ENCODE measurements at regions of chr14 and their contacts with region 1.

Region 1: GRCh38 chr14:89977668-89978067 is 21.9 kb downstream of the TDP1 start:
- DNase-seq: no peak
- ATAC-seq: no peak
- H3K4me3 ChIP-seq: no peak overlapping the region
- H3K27ac ChIP-seq: no peak overlapping the region
- H3K4me1 ChIP-seq: peaks cover 0 to 5% of the 10 kb centered on the region in 2 donors
- H3K27me3 ChIP-seq: no peaks in the 10 kb centered on the region
- CTCF ChIP-seq: no peak
- POLR2A ChIP-seq: no peak

Region 2: GRCh38 chr14:90045616-90046015 is 67.9 kb after region 1 on chr14:
- in situ Hi-C with region 1: no loop called
- intact Hi-C with region 1: no loop called
- DNase-seq: no peak
- ATAC-seq: no peak
- H3K4me3 ChIP-seq: no peak overlapping the region
- H3K27ac ChIP-seq: no peak overlapping the region
- H3K4me1 ChIP-seq: no peaks in the 10 kb centered on the region
- H3K27me3 ChIP-seq: no peaks in the 10 kb centered on the region
- CTCF ChIP-seq: no peak
- POLR2A ChIP-seq: no peak

Region 3: DNA sequence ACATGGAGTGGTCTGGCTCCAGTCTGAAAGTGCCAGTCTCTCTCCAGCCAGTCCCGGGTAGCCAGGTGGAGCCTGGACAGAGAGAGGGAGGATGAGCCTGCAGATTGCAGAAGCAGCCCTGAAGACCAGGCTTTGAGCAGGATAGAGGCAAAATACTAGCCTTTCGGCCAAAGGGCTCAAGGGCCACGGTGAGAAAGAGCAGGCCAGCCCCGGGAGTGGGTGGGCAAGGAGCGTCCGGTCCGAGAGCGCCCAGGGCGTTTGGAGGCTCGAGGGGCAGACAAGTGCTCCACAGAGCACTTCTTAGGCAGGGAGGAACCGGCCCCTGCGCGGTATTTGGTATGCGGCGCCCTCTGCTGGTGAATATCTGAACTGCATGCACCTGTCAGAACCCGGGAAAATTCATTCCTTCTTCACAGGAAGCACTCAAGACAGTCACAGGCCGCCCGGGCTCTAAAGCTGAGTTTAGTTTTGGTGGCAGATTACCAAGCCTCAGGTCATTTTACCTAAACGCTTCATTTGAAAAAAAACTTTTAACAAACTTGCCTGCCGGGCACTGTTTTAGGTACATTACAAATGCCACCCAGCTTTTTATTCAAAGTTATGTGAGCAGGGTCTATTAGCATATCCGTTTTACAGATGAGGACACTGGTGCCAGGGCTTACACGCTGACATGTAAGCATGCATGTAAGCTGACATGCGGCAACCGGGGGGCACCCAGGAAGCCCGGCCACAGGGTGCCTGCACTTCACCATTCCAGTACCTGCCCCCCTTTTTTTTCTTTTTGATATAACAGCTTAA is 257.7 kb after region 1 on chr14:
- in situ Hi-C with region 1: loop called in 1 of 4 experiments (anchors 25 kb)
- intact Hi-C with region 1: no loop called
- DNase-seq: peak in 1 of 2 donors; percentile 9
- ATAC-seq: no peak
- H3K4me3 ChIP-seq: no peak overlapping the region
- H3K27ac ChIP-seq: no peak overlapping the region
- H3K4me1 ChIP-seq: no peaks in the 10 kb centered on the region
- H3K27me3 ChIP-seq: peaks cover 4 to 16% (median 7%) of the 10 kb centered on the region in 3 donors
- CTCF ChIP-seq: peak; percentile 40 to 70 (median 66)
- POLR2A ChIP-seq: no peak

Region 4: GRCh38 chr14:90533591-90534021 is 555.9 kb after region 1 on chr14:
- in situ Hi-C with region 1: no loop called
- intact Hi-C with region 1: no loop called
- DNase-seq: no peak
- ATAC-seq: no peak
- H3K4me3 ChIP-seq: no peak overlapping the region
- H3K27ac ChIP-seq: peak overlapping the region in 2 of 4 donors; percentile 33 to 54
- H3K4me1 ChIP-seq: no peaks in the 10 kb centered on the region
- H3K27me3 ChIP-seq: no peaks in the 10 kb centered on the region
- CTCF ChIP-seq: no peak
- POLR2A ChIP-seq: no peak